ENCODE measurements at regions of chrX and their contacts with region 1.

Region 1: GRCh38 chrX:79366873-79367749 is at the start of gene ITM2A:
- DNase-seq: peak; percentile 36 to 85 (median 55)
- ATAC-seq: peak; percentile 86
- H3K4me3 ChIP-seq: peak within 1 kb of the TSS; percentile 86
- H3K4me3 Mint-ChIP-seq: peak within 1 kb of the TSS; percentile 98
- H3K27ac ChIP-seq: peak within 1 kb of the TSS; percentile 77 to 88
- H3K27ac Mint-ChIP-seq: peak within 1 kb of the TSS; percentile 99
- H3K4me1 ChIP-seq: peaks cover 13% of the 10 kb centered on the region
- H3K4me1 Mint-ChIP-seq: peaks cover 27% of the 10 kb centered on the region
- H3K27me3 ChIP-seq: no peaks in the 10 kb centered on the region
- H3K27me3 Mint-ChIP-seq: no peaks in the 10 kb centered on the region
- CTCF ChIP-seq: no peak
- total RNA-seq, gene ITM2A: 236 to 259 TPM

Region 2: GRCh38 chrX:79161655-79162054 is 205.5 kb before region 1 on chrX:
- CTCF ChIA-PET with region 1: no interaction called
- POLR2A ChIA-PET with region 1: interaction called, 4 read pairs
- intact Hi-C with region 1: loop called in 1 of 2 experiments (anchors 10 kb)
- DNase-seq: peak in 8 of 14 experiments; percentile 14 to 92 (median 52)
- ATAC-seq: peak; percentile 88
- H3K4me3 ChIP-seq: peak overlapping the region; percentile 50
- H3K4me3 Mint-ChIP-seq: peak overlapping the region; percentile 94
- H3K27ac ChIP-seq: peak overlapping the region; percentile 74 to 80
- H3K27ac Mint-ChIP-seq: peak overlapping the region; percentile 97
- H3K4me1 ChIP-seq: peaks cover 25% of the 10 kb centered on the region
- H3K4me1 Mint-ChIP-seq: peaks cover 88% of the 10 kb centered on the region
- H3K27me3 ChIP-seq: no peaks in the 10 kb centered on the region
- H3K27me3 Mint-ChIP-seq: no peaks in the 10 kb centered on the region
- CTCF ChIP-seq: no peak

Measured in CD4-positive, alpha-beta T cell (primary cell).